HEK293 (cell line): ENCODE measurements at regions of chr2 and their contacts with region 1.

Region 1: GRCh38 chr2:101770726-101771125 is 73.2 kb downstream of the MAP4K4 start:
- H3K4me3 ChIP-seq: no peak overlapping the region
- H3K27ac ChIP-seq: no peak overlapping the region
- H3K4me1 ChIP-seq: peaks cover 22% of the 10 kb centered on the region
- CTCF ChIP-seq: peak; percentile 16; the same call in 1 of the 2 replicates

Region 2: DNA sequence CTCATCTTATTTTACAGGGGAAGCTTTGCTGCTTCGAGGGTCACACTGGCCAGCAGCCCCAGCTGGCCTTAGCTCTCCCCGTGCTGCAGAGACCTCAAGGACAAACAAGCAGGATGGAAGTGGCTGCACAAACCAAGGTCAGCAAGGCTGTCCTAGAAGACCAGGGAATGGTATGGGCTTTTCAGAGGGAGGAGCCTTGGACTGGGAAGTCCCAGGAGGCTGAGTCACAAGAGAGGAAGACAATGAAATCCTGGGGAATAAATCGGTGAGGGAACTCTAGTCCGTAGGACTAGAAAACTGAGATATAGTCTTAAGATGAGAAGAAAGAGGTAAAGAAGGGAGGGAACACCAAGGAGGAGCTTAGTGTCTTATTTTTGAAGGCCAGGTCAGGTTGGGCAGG is 399.1 kb before region 1 on chr2:
- CTCF ChIA-PET with region 1: no interaction called
- POLR2A ChIA-PET with region 1: no interaction called
- H3K4me3 ChIP-seq: no peak overlapping the region
- H3K27ac ChIP-seq: no peak overlapping the region
- H3K4me1 ChIP-seq: no peaks in the 10 kb centered on the region
- CTCF ChIP-seq: no peak

Region 3: GRCh38 chr2:101781326-101781725 is 10.6 kb after region 1 on chr2:
- CTCF ChIA-PET with region 1: interaction called, 10 read pairs
- POLR2A ChIA-PET with region 1: no interaction called
- H3K4me3 ChIP-seq: no peak overlapping the region
- H3K27ac ChIP-seq: no peak overlapping the region
- H3K4me1 ChIP-seq: peaks cover 32% of the 10 kb centered on the region
- CTCF ChIP-seq: no peak